GM23248 (cell line): ENCODE measurements at regions of chr15 and their contacts with region 1.

Region 1: GRCh38 chr15:25438601-25439368 is at the start of gene UBE3A:
- DNase-seq: peak; percentile 98
- H3K4me3 ChIP-seq: peak within 1 kb of the TSS; percentile 96
- H3K27ac ChIP-seq: peak within 1 kb of the TSS; percentile 93
- H3K4me1 ChIP-seq: peaks cover 24% of the 10 kb centered on the region
- H3K27me3 ChIP-seq: no peaks in the 10 kb centered on the region
- total RNA-seq, gene UBE3A: 55.4 and 58.8 TPM in 2 replicates

Region 2: GRCh38 chr15:24678485-24678884 is 760.3 kb before region 1 on chr15:
- in situ Hi-C with region 1: no loop called
- DNase-seq: no peak
- H3K4me3 ChIP-seq: no peak overlapping the region
- H3K27ac ChIP-seq: no peak overlapping the region
- H3K4me1 ChIP-seq: no peaks in the 10 kb centered on the region
- H3K27me3 ChIP-seq: no peaks in the 10 kb centered on the region

Region 3: DNA sequence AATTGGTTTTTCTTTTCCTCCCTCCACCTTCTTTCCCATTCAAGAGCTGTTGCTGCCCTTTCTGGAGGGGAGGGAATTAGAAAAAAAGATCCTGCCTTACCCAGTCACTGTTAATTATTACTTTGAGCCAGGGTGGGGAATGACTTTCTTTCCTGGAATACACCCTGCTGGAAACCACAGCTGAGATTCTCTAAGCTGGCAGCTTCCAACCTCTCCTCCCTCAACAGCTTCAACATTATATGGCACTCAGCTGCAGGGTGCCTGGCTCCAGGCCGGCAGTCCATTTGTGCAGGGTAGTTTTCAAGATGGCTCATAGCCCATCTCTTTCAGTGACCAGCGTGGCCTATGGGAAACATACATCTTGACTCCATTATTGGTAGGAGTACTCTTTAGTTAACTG is 105.7 kb before region 1 on chr15:
- in situ Hi-C with region 1: loop called (anchors 10 kb)
- DNase-seq: no peak
- H3K4me3 ChIP-seq: no peak overlapping the region
- H3K27ac ChIP-seq: no peak overlapping the region
- H3K4me1 ChIP-seq: no peaks in the 10 kb centered on the region
- H3K27me3 ChIP-seq: no peaks in the 10 kb centered on the region